Astrocyte of the cerebellum (primary cell): ENCODE measurements at regions of chr1 and their contacts with region 1.

Region 1: DNA sequence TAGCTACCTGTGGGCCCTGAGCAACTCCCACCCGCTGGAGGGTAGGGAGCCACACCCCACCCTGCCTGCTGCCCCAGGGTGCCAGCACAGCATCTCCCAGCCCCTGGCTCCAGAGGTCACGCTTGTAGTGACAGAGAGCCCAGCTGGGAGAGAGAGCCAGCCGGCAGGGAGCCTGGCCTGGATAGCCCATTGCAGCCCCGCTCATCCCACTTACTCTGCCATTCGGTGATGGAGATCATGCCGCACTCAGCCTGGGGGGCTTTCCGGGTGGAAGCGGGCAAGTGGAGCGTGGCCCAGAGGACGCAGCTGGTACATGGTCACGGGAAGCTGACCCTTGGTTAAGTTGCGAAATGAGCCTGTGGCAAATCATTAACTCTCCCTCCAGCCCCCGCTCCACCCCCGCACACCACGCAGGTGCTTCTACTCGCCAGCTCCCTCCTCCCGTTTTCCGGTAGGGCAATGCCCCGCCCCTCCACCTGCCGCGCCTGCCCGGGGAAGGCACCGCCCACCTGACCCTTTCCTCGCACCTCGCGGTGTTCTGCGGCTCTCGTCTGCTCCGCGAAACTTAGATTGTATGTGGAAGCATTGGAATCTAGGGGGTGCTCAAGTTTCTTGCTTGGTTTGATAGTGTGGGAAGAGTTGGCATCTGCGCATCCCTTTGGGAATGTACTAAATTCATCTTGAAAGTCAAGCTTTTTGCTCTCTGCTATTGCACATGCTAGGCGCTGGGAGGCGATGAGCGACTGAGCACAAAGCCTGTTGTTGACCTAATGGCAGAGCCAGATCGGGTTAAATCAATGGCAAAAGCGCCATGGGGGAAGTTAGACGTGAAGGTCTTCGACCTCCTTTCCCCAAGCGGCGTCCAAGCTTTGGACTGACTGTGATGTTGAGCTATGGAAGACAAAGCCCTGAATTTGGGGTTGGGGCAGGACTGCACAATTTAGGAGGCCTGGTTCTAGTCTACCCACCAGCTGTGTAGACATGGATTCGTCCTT is at the start of gene GOLT1A:
- DNase-seq: peak; percentile 71
- H3K4me3 ChIP-seq: peak within 1 kb of the TSS; percentile 7
- CTCF ChIP-seq: peak; percentile 88

Region 2: DNA sequence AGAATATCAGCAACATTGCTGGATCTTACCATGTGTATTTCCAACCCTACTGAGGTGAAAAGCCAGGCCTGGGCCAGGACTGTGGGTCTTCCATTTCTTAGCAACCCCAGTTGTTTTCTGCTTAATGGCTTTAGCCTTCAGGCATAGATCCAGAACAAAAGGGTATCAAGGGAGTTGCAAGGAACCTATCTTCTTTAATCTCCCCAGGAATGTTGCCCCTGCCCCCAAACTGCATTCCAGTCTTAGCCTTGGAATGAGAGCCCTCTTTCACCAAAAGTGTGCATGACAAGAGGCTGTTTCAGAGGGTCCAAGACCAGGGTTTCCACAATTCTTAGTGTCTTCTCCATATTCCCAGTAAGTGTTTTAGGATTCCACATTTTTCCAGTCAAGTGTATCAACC is 228.9 kb before region 1 on chr1:
- in situ Hi-C with region 1: no loop called
- DNase-seq: no peak
- H3K4me3 ChIP-seq: no peak overlapping the region
- CTCF ChIP-seq: no peak

Region 3: GRCh38 chr1:204154568-204155255 is 59.3 kb before region 1 on chr1:
- in situ Hi-C with region 1: loop called (anchors 5 kb)
- DNase-seq: no peak
- H3K4me3 ChIP-seq: no peak overlapping the region
- CTCF ChIP-seq: no peak

Region 4: GRCh38 chr1:204177133-204177532 is 36.8 kb before region 1 on chr1:
- in situ Hi-C with region 1: no loop called
- DNase-seq: no peak
- H3K4me3 ChIP-seq: no peak overlapping the region
- CTCF ChIP-seq: no peak

Region 5: DNA sequence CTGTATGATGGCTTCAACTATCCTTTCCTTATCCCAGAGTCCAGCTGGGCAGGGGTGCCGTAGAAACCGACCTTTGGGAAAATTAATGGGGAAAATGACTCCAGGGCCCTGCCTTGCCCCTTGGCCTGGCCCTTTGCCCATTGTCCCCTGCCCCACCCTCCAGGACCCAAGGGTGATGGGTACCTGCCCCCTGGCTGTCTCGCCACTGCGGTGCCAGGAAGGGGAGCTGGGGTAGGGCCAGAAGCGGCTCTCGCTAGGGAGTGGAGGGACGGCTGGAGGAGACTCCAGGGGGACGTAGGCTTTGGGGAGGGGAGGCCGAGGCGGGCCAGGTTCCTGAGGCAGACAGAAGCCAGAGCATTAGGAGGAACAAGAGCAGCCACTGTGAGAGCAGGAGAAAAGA is 29.0 kb after region 1 on chr1:
- in situ Hi-C with region 1: no loop called
- DNase-seq: no peak
- H3K4me3 ChIP-seq: no peak overlapping the region
- CTCF ChIP-seq: no peak

Region 6: GRCh38 chr1:204363335-204364124 is 149.6 kb after region 1 on chr1:
- in situ Hi-C with region 1: loop called (anchors 10 kb)
- DNase-seq: peak; percentile 35
- H3K4me3 ChIP-seq: peak overlapping the region; percentile 41
- CTCF ChIP-seq: peak; percentile 85